ENCODE measurements at regions of chr2 and their contacts with region 1.

Region 1: DNA sequence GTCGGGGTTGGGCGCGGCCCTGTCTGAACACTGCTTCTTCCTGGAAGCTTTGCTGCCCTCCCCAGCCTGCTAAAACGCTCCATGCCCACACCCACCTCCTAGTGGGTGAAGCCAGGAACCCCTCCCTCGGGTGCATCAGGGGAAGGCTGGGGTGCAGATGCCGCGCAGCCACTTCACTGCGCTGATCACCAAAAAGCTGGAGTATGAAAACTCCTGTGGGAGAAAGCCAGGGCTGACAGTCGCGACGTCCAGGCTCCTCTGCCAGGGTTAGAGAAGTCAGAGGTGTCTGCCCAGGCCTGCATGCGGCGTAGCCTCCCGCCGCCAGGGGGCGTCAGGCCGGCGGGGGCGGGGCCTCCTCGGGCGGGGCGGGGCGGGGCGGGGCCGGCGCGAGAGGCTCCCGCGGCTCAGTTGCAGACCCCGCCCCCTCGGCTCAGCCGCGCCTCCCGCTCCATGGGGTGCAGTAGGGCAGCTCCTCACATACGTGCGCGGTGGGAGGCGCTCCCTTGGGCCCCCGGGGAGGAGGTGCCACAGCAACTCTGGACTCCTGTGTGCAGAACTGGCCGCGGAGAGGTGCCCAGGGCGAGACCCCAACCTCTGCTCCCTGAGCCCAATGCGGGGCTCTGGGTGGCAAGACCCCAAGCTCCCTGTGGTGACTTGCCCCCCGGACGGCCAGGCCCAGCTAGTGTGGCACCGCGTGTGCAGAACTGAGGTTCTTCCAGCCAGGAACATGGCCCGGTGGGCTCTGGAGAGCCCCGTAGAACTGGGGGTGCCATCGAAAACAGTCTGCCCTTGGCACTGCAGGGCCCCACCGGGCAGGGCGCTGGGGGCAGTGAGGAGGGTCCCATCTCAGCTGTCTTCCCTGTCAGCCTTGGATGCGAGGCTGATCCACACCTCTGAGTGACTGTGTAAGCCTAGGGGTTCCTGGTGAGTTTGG is 1.8 kb upstream of the RNPEPL1 start:
- DNase-seq: peak; percentile 98
- ATAC-seq: peak; percentile 67
- H3K4me3 Mint-ChIP-seq: peak overlapping the region; percentile 87
- H3K27ac Mint-ChIP-seq: peak overlapping the region; percentile 98
- H3K4me1 Mint-ChIP-seq: peaks cover 65% of the 10 kb centered on the region
- H3K27me3 Mint-ChIP-seq: no peaks in the 10 kb centered on the region

Region 2: DNA sequence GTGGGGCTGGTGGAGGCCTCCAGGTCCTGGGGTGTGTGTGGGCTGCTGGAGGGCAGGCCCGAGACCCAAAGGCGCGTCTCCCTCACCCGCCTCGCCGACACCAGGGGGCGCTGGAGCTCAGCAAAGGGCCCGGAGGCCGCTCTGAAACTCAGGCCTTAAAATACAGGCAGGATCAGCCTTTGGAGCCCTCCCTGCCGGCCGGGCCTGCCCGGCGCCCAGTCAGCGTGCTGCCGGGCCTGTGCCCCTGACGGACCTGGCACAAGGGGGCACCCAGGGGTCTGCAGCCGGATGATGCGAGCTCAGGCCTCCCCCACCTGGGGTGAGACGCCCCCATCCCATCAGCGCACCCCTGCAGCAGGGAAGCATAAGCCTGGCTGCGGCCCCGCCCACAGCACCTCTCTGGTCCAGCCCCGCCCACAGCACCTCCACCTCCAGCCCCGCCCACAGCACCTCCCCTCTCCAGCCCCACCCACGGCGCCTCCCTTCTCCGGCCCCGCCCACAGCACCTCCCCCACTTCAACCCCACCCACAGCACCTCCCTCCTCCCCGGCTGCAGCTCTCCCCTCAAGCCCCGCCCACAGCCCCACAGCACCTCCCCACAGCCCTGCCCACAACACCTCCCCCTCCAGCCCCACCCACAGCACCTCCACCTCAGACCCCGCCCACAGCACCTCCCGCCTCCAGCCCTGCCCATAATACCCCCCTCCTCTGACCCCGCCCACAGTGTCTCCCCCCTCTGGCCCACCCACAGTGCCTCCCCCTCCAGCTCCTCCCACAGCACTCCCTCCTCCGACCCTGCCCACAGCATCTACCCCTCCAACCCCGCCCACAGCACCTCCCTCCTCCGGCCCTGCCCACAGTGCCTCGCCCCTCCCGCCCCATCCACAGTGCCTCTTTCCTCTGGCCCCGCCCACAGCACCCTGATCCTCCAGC is 333.2 kb before region 1 on chr2:
- CTCF ChIA-PET with region 1: no interaction called
- POLR2A ChIA-PET with region 1: no interaction called
- intact Hi-C with region 1: loop called in 1 of 2 experiments (anchors 1 kb)
- DNase-seq: peak; percentile 88
- ATAC-seq: peak; percentile 70
- H3K4me3 Mint-ChIP-seq: no peak overlapping the region
- H3K27ac Mint-ChIP-seq: no peak overlapping the region
- H3K4me1 Mint-ChIP-seq: no peaks in the 10 kb centered on the region
- H3K27me3 Mint-ChIP-seq: peaks cover 11% of the 10 kb centered on the region

Region 3: GRCh38 chr2:240579771-240580614 is 13.5 kb after region 1 on chr2:
- CTCF ChIA-PET with region 1: interaction called, 61 read pairs
- POLR2A ChIA-PET with region 1: interaction called, 34 read pairs
- intact Hi-C with region 1: loop called in 1 of 2 experiments (anchors 1 kb)
- DNase-seq: peak; percentile 88
- ATAC-seq: peak; percentile 89
- H3K4me3 Mint-ChIP-seq: no peak overlapping the region
- H3K27ac Mint-ChIP-seq: peak overlapping the region; percentile 85
- H3K4me1 Mint-ChIP-seq: peaks cover 34% of the 10 kb centered on the region
- H3K27me3 Mint-ChIP-seq: no peaks in the 10 kb centered on the region

Region 4: GRCh38 chr2:240624950-240625621 is 58.6 kb after region 1 on chr2 and contains the start of gene GPR35:
- CTCF ChIA-PET with region 1: no interaction called
- POLR2A ChIA-PET with region 1: interaction called, 3 read pairs
- intact Hi-C with region 1: loop called (anchors 1 to 5 kb)
- DNase-seq: peak; percentile 87
- ATAC-seq: peak; percentile 53
- H3K4me3 Mint-ChIP-seq: peak within 1 kb of the TSS; percentile 43
- H3K27ac Mint-ChIP-seq: peak within 1 kb of the TSS; percentile 84
- H3K4me1 Mint-ChIP-seq: peaks cover 52% of the 10 kb centered on the region
- H3K27me3 Mint-ChIP-seq: no peaks in the 10 kb centered on the region
- total RNA-seq, gene GPR35: 3.6 to 4.1 TPM

Region 5: DNA sequence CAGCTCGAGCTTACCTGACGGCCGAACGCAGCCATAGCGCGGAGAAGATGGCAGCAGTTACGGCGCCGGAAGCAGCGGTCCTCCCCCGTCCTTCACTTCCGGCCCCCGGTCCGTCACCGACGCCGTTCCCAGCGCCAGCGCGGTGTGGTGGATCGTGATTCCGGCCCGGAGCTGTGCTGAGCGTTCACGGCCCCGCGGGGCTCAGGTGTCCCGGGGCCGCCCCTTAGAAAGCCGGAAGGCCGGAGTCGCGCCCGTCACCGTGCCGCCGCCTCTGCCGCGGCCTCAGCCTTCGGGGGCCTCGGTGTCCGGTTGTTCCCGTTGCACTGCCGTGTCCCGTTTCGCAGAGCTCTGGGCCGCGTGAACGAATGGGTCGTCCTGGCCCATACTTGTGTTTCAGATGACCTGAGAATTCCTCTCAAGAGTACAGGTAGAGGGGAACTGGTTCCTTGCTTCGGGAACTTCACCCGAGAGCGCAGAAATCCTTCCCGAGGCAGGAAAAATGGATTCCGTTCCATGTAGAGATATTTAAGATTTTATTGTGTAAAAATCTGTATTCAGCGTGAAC is 535.9 kb after region 1 on chr2 and contains the start of gene MTERF4:
- CTCF ChIA-PET with region 1: no interaction called
- POLR2A ChIA-PET with region 1: no interaction called
- intact Hi-C with region 1: loop called in 1 of 2 experiments (anchors 5 kb)
- DNase-seq: peak; percentile 94
- ATAC-seq: peak; percentile 97
- H3K4me3 Mint-ChIP-seq: peak within 1 kb of the TSS; percentile 98
- H3K27ac Mint-ChIP-seq: peak within 1 kb of the TSS; percentile 99
- H3K4me1 Mint-ChIP-seq: peaks cover 48% of the 10 kb centered on the region
- H3K27me3 Mint-ChIP-seq: no peaks in the 10 kb centered on the region
- total RNA-seq, gene MTERF4: 34.4 to 34.5 TPM

Region 6: GRCh38 chr2:241702132-241703031 is 1135.9 kb after region 1 on chr2:
- CTCF ChIA-PET with region 1: no interaction called
- POLR2A ChIA-PET with region 1: no interaction called
- intact Hi-C with region 1: loop called in 1 of 2 experiments (anchors 1 kb)
- DNase-seq: peak; percentile 94
- ATAC-seq: peak; percentile 70
- H3K4me3 Mint-ChIP-seq: peak overlapping the region; percentile 86
- H3K27ac Mint-ChIP-seq: peak overlapping the region; percentile 75
- H3K4me1 Mint-ChIP-seq: peaks cover 29% of the 10 kb centered on the region
- H3K27me3 Mint-ChIP-seq: no peaks in the 10 kb centered on the region